Endothelial cell of umbilical vein (primary cell): ENCODE measurements at regions of chr7 and their contacts with region 1.

Region 1: DNA sequence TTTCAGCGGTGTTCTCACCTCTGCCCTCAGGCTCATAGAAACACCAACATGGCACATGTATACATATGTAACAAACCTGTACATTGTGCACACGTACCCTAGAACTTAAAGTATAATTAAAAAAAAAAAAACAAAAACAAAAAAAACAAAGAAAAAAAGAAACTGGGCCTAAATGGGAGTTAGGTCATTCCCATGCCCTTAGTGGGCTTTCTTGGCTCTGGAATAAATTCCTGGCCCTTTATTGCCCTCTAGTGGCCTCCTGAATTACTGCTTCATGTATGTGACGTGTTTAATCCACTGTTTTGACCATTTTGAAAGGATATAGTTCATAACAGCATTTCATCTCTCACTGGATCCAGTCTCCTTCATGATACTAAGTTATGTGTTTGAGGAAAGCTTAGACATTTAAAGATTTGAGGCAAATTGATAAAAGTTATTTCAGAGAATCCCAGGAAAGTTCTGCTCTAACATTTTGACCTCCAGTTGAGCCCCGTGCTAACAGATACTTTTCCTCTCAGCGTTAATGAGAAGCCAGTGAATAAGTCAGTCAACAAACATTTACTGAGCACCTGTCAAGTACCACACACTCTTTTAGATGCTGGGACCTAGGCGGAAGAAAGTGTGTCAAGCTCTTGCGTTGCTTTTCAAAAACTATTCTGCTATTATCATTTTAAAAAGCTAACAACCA is 54.7 kb upstream of the SYPL1 start:
- DNase-seq: peak; percentile 69
- H3K4me3 ChIP-seq: no peak overlapping the region
- H3K27ac ChIP-seq: no peak overlapping the region
- H3K4me1 ChIP-seq: no peaks in the 10 kb centered on the region
- H3K27me3 ChIP-seq: no peaks in the 10 kb centered on the region
- CTCF ChIP-seq: peak; percentile 63 to 70
- POLR2A ChIP-seq: no peak

Region 2: DNA sequence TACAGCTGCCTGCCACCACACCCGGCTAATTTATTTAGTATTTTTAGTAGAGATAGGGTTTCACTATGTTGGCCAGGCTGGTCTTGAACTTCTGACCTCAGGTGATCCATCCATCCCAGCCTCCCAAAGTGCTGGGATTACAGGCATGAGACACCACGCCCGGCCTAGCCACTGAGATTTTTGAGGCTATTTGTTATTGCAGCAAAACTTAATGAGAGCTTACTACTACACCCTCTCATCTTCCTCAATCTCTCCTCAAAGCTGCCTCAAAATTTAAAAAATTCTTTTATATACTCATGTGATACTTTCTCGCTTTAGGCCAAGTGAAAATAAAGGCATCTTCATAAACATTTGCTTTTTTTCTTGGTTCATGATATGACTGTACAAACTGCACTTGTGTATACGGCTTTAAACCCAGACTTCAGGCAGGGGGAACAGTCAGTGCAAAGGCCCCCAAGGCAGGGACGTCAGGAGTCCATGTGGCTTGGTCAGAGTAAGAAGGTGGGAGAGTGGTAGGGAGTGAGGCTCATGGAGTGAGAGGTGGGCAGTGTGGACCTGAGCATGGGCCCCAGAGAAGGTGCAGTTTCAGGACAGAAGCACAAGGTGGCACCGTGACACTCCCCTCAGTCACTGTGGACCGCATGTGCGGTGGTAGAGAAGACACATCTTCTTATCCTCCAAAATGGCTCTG is 110.1 kb before region 1 on chr7:
- CTCF ChIA-PET with region 1: interaction called, 10 read pairs
- POLR2A ChIA-PET with region 1: no interaction called
- dilution Hi-C with region 1: loop called (anchors 25 kb)
- intact Hi-C with region 1: loop called (anchors 1 kb)
- DNase-seq: peak; percentile 70
- H3K4me3 ChIP-seq: no peak overlapping the region
- H3K27ac ChIP-seq: no peak overlapping the region
- H3K4me1 ChIP-seq: no peaks in the 10 kb centered on the region
- H3K27me3 ChIP-seq: peaks cover 5 to 10% of the 10 kb centered on the region in 2 experiments
- CTCF ChIP-seq: peak; percentile 76 to 90
- POLR2A ChIP-seq: no peak